ENCODE measurements at regions of chr3 and their contacts with region 1.

Region 1: GRCh38 chr3:28916713-28917499 is 364.0 kb upstream of the RBMS3 start:
- DNase-seq: peak; percentile 16
- H3K4me3 Mint-ChIP-seq: no peak overlapping the region
- H3K27ac Mint-ChIP-seq: no peak overlapping the region
- H3K4me1 Mint-ChIP-seq: peaks cover 6% of the 10 kb centered on the region
- H3K27me3 Mint-ChIP-seq: peaks cover 5% of the 10 kb centered on the region

Region 2: GRCh38 chr3:28544236-28544635 is 372.7 kb before region 1 on chr3:
- CTCF ChIA-PET with region 1: no interaction called
- intact Hi-C with region 1: no loop called
- DNase-seq: no peak
- H3K4me3 Mint-ChIP-seq: no peak overlapping the region
- H3K27ac Mint-ChIP-seq: no peak overlapping the region
- H3K4me1 Mint-ChIP-seq: no peaks in the 10 kb centered on the region
- H3K27me3 Mint-ChIP-seq: no peaks in the 10 kb centered on the region

Region 3: DNA sequence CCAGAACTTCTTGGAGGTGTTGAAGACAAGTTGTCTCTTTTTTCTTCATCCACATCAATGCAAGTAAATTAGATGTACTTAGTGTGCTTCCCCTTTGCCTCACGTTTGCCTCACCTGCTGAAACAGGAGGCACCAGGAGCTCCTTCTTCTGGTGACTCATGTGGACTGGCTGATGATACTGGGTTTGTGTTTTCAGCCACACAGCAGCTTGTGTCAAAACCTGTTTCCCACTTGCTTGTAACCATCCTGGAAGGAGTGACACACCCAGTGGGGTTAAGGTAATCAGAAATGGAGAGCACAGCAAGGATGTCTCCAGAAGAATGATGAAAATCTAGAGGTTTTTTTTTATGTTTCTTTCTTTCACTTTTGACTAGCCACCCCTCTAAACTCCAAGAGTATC is 220.7 kb after region 1 on chr3:
- CTCF ChIA-PET with region 1: no interaction called
- intact Hi-C with region 1: loop called (anchors 10 kb)
- DNase-seq: peak; percentile 34
- H3K4me3 Mint-ChIP-seq: no peak overlapping the region
- H3K27ac Mint-ChIP-seq: no peak overlapping the region
- H3K4me1 Mint-ChIP-seq: peaks cover 3% of the 10 kb centered on the region
- H3K27me3 Mint-ChIP-seq: no peaks in the 10 kb centered on the region

Region 4: GRCh38 chr3:30012941-30013543 is 1096.1 kb after region 1 on chr3:
- CTCF ChIA-PET with region 1: no interaction called
- intact Hi-C with region 1: loop called (anchors 10 kb)
- DNase-seq: peak; percentile 72
- H3K4me3 Mint-ChIP-seq: no peak overlapping the region
- H3K27ac Mint-ChIP-seq: no peak overlapping the region
- H3K4me1 Mint-ChIP-seq: no peaks in the 10 kb centered on the region
- H3K27me3 Mint-ChIP-seq: no peaks in the 10 kb centered on the region

Measured in activated naive CD4-positive, alpha-beta T cell treated with anti-CD3 and anti-CD28 coated beads for 36 hours (primary cell).